Panc1 (cell line): ENCODE measurements at regions of chrX and their contacts with region 1.

Region 1: GRCh38 chrX:147476008-147476407 is 435.7 kb upstream of the FMR1 start:
- DNase-seq: no peak
- ATAC-seq: no peak
- H3K4me3 ChIP-seq: no peak overlapping the region
- H3K27ac ChIP-seq: no peak overlapping the region
- H3K4me1 ChIP-seq: no peaks in the 10 kb centered on the region
- H3K27me3 ChIP-seq: no peaks in the 10 kb centered on the region
- CTCF ChIP-seq: peak; percentile 63

Region 2: GRCh38 chrX:147602176-147602696 is 126.2 kb after region 1 on chrX:
- CTCF ChIA-PET with region 1: no interaction called
- POLR2A ChIA-PET with region 1: no interaction called
- in situ Hi-C with region 1: no loop called
- intact Hi-C with region 1: no loop called
- DNase-seq: no peak
- ATAC-seq: no peak
- H3K4me3 ChIP-seq: no peak overlapping the region
- H3K27ac ChIP-seq: no peak overlapping the region
- H3K4me1 ChIP-seq: no peaks in the 10 kb centered on the region
- H3K27me3 ChIP-seq: no peaks in the 10 kb centered on the region
- CTCF ChIP-seq: no peak; the same call in 1 of the 2 replicates

Region 3: GRCh38 chrX:147803948-147804347 is 327.9 kb after region 1 on chrX:
- CTCF ChIA-PET with region 1: no interaction called
- POLR2A ChIA-PET with region 1: no interaction called
- in situ Hi-C with region 1: no loop called
- intact Hi-C with region 1: loop called (anchors 5 kb)
- DNase-seq: no peak
- ATAC-seq: no peak
- H3K4me3 ChIP-seq: no peak overlapping the region
- H3K27ac ChIP-seq: no peak overlapping the region
- H3K4me1 ChIP-seq: no peaks in the 10 kb centered on the region
- H3K27me3 ChIP-seq: no peaks in the 10 kb centered on the region
- CTCF ChIP-seq: peak; percentile 66; the same call in 1 of the 2 replicates

Region 4: GRCh38 chrX:148080593-148080992 is 604.6 kb after region 1 on chrX:
- CTCF ChIA-PET with region 1: no interaction called
- POLR2A ChIA-PET with region 1: no interaction called
- in situ Hi-C with region 1: no loop called
- intact Hi-C with region 1: no loop called
- DNase-seq: no peak
- ATAC-seq: no peak
- H3K4me3 ChIP-seq: no peak overlapping the region
- H3K27ac ChIP-seq: no peak overlapping the region
- H3K4me1 ChIP-seq: no peaks in the 10 kb centered on the region
- H3K27me3 ChIP-seq: no peaks in the 10 kb centered on the region; the same call in 1 of the 2 replicates
- CTCF ChIP-seq: no peak